ENCODE measurements at regions of chr22 and their contacts with region 1.

Region 1: DNA sequence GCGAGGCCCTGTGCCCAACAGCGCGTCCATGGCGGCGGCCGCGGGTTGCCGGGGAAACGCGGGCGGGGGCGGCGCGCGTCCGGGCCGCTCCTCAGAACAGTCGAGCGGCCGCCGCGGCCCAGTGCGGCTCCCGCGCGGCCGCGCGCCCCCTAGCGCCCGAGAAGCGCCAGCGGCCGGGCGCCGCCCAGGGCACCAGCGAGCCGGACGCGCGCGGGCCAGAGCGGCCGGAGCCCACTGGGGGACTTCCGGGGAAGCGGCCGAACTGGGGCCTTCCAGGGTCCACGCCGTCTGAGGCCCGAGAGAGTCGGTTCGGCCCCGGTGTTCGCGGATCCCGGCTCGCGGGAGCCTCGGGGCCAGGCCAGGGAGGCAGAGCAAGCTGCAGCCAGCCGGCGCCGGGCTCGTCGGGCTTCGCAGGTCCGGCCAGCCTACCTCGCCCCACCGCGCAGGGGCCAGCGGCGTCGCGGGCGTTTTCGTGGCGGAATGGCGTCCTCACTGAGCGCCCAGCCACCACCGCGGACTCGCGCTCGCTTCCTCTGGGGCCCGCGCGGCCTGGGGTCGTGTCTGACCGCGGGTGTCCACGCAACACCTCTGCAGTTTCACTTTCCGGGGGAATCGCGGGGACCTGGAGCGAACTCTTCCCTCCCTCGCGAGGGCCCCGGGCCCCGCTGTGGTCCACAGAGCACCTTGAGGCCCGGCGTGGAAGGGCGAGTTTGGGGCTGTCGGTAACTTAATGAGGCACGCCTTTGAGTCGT is at the start of gene DENND6B:
- DNase-seq: peak; percentile 85
- H3K4me3 ChIP-seq: peak within 1 kb of the TSS; percentile 93
- H3K27ac ChIP-seq: peak within 1 kb of the TSS; percentile 96
- H3K4me1 ChIP-seq: peaks cover 19% of the 10 kb centered on the region
- H3K27me3 ChIP-seq: no peaks in the 10 kb centered on the region
- CTCF ChIP-seq: peak; percentile 68
- total RNA-seq, gene DENND6B: 1.2 TPM

Region 2: DNA sequence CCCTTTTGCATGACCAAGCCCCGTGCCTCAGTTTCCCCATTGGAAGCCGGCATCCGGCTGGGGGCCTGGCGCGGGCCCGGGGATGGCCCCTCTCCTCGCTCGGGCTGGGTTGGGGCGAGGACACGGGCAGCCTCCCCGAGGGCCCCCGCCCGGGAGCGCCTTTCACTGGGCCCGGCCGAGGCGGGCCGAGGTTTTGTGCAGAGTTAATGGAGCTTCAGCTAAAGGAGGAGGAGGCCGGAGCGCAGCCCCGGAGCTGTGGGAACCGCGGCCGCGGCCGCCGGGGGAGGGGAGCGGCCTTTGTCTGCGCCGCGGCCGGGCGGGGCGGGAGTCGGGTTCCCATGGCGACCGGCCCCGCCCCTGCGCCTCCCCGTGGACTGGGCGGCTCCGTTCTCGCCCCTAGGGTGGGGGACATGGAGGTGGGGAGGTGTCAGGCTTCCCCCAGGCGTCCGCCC is 55.6 kb before region 1 on chr22:
- intact Hi-C with region 1: loop called (anchors 5 kb)
- DNase-seq: peak; percentile 71
- H3K4me3 ChIP-seq: peak overlapping the region; percentile 67
- H3K27ac ChIP-seq: peak overlapping the region; percentile 87
- H3K4me1 ChIP-seq: peaks cover 69% of the 10 kb centered on the region
- H3K27me3 ChIP-seq: peaks cover 11% of the 10 kb centered on the region
- CTCF ChIP-seq: peak; percentile 22

Measured in left ventricle myocardium inferior (tissue), 1 donor.